ENCODE measurements at regions of chr20 and their contacts with region 1.

Region 1: DNA sequence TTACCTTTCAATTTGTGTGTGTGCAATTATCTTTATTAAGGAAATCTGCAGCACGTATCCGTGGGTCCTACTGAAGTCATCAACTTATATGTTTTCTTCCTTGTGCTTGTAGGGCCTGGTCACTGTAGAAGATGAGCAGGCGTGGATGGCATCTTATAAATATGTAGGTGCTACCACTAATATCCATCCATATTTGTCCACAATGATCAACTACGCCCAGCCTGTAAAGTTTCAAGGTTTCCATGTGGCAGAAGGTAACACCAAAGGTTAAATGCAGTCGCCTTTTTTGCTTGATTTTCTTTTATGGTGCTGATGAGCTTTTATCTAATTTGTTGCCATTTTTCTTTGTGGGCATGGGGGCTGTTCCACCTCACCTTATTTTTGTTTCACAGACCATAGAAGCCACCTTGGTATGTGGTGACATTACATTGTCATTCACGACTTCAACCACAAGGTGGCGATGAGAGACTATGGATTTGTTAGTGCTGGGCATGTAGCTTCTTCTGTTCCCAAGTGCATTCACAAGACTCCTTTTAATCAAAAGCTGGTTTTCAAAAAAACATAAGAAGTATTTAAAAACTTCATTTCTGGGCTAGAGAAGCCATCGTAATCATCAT is 106.5 kb upstream of the LAMP5 start:
- DNase-seq: peak; percentile 61
- ATAC-seq: no peak
- H3K4me3 Mint-ChIP-seq: no peak overlapping the region
- H3K27ac Mint-ChIP-seq: no peak overlapping the region
- H3K4me1 Mint-ChIP-seq: no peaks in the 10 kb centered on the region
- H3K27me3 Mint-ChIP-seq: no peaks in the 10 kb centered on the region

Region 2: DNA sequence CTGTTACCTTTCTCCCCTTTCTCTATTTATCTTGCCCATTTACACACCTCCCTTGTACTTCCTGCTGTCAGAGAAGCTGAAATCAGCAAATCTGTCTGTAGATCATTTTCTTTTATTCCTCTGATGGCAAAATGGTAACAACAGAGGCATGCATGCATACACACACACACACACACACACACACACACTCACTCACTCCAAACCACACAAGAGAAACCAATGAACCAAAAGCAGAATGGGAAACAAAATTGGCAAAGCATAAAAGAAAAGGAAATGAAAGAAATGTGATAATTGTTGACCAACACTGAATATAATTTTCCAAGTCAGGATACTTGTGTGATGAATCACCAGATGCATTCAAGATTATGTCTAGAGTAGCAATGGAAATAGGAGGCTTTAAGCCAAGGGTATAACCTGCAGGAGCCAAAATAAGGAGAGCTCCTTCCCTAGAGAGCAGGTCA is 166.7 kb before region 1 on chr20:
- CTCF ChIA-PET with region 1: no interaction called
- DNase-seq: no peak
- ATAC-seq: no peak
- H3K4me3 Mint-ChIP-seq: no peak overlapping the region
- H3K27ac Mint-ChIP-seq: no peak overlapping the region
- H3K4me1 Mint-ChIP-seq: no peaks in the 10 kb centered on the region
- H3K27me3 Mint-ChIP-seq: no peaks in the 10 kb centered on the region

Region 3: DNA sequence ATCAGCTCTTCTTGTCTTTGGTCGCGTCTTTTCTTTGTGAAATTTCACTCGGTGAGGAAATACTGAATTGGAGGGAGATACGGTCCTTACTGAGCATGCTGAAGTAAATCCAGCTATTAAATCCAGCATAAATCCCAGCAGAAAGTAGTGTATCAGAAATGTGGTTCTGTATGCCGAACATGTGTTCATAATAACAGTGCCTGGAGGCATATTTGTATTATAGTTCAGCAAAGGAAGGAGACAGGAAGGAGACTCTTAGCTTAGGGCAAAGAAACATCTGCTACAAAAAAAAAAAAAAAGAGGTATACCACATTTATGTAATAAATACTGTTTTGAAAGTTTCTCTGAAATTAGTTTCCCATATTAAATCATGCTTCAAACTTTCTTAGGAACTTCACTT is 127.2 kb before region 1 on chr20:
- CTCF ChIA-PET with region 1: no interaction called
- DNase-seq: no peak
- ATAC-seq: no peak
- H3K4me3 Mint-ChIP-seq: no peak overlapping the region
- H3K27ac Mint-ChIP-seq: no peak overlapping the region
- H3K4me1 Mint-ChIP-seq: no peaks in the 10 kb centered on the region
- H3K27me3 Mint-ChIP-seq: no peaks in the 10 kb centered on the region

Region 4: DNA sequence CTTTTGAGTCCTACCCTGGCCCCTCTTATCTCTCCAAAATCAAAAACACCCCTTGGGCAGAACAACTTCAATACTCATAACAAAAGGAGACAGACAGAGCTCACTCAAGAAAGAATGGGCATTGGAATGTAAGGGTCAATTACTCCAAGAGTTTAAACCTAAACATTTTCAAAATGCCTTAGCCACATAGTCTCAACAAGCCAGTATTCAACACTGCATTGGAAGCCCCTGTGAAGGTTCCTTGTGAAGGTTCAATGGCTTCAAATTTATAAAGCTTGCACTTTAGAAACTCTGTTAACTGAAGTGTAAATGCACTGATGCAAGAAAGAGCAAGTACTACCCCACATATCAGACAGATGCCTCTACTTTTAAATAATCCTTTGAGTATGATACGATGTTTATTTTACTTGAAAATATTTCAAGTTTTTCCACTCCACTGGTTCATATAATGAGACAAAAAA is 32.7 kb before region 1 on chr20:
- CTCF ChIA-PET with region 1: no interaction called
- DNase-seq: no peak
- ATAC-seq: no peak
- H3K4me3 Mint-ChIP-seq: no peak overlapping the region
- H3K27ac Mint-ChIP-seq: no peak overlapping the region
- H3K4me1 Mint-ChIP-seq: no peaks in the 10 kb centered on the region
- H3K27me3 Mint-ChIP-seq: no peaks in the 10 kb centered on the region

Region 5: DNA sequence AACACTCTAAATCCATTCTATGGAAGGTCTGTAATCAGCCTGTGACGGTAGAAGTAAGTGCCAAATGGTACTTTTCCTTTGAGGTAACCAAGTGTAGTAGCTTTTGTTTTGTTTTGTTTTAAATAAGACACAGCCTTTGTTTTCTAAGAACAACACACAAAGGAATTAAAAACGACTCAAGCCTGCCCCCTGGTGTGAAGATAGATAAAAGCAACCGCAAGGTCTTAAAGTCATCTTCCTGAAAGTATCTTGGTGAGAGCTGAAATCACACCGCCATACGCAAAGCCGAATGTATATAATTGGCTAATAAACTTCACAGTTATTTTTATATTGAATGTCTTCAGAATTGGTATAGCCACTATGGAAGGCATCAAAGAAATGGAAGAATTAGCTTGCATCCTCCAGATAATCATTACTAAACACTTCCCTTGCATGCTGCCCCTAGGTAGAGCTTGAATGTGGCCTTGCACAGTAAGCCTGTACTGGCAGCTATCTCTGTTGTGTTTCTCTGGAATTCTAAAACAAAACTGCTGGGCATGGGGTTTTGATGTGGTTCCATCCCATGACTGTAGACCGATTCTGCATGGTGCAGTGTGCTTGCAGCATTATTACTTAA is 202.1 kb after region 1 on chr20:
- CTCF ChIA-PET with region 1: interaction called, 53 read pairs
- DNase-seq: peak; percentile 64
- ATAC-seq: no peak
- H3K4me3 Mint-ChIP-seq: no peak overlapping the region
- H3K27ac Mint-ChIP-seq: no peak overlapping the region
- H3K4me1 Mint-ChIP-seq: no peaks in the 10 kb centered on the region
- H3K27me3 Mint-ChIP-seq: no peaks in the 10 kb centered on the region